Activated CD4-positive, alpha-beta T cell treated with anti-CD3 and anti-CD28 coated beads for 36 hours (primary cell): ENCODE measurements at regions of chr6 and their contacts with region 1.

Region 1: DNA sequence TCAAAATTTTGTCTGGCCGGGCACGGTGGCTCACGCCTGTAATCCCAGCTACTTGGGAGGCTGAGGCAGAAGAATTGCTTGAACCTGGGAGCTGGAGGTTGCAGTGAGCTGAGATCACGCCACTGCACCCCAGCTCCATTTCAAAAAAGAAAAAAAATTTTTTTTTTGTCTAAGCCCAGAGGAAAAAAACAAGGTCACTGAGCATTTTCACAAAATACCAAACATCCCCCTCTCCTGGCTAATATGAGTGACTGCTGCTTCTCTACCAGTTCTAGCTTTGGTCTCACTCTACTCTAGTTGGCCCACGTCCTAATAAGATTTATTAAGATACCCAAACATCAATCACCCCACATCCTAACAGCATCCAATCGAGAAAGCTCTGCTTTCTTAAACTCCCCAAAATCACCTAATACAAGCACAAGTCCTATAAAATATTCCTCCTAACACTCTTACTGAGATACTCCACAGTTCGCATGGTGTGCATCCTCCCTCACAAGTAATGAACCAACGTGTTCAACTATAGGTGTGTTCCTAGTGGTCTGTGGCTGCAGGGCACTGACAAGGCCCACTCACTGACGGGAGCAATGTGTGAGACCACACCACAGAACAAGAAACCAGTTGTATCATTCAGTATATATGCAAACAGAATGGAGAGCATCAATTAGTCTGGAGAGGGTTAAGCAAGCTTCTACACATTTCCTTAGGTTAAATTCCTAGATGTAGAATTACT is 64.2 kb downstream of the FKBP5 start:
- DNase-seq: no peak
- ATAC-seq: peak; percentile 57
- H3K4me3 Mint-ChIP-seq: no peak overlapping the region
- H3K27ac Mint-ChIP-seq: peak overlapping the region; percentile 58
- H3K4me1 Mint-ChIP-seq: peaks cover 41% of the 10 kb centered on the region
- H3K27me3 Mint-ChIP-seq: no peaks in the 10 kb centered on the region

Region 2: GRCh38 chr6:35590622-35591066 is 33.9 kb before region 1 on chr6:
- CTCF ChIA-PET with region 1: interaction called, 63 read pairs
- POLR2A ChIA-PET with region 1: no interaction called
- intact Hi-C with region 1: loop called in 1 of 2 experiments (anchors 2 kb)
- DNase-seq: no peak
- ATAC-seq: no peak
- H3K4me3 Mint-ChIP-seq: no peak overlapping the region
- H3K27ac Mint-ChIP-seq: peak overlapping the region; percentile 47
- H3K4me1 Mint-ChIP-seq: peaks cover 88% of the 10 kb centered on the region
- H3K27me3 Mint-ChIP-seq: no peaks in the 10 kb centered on the region

Region 3: DNA sequence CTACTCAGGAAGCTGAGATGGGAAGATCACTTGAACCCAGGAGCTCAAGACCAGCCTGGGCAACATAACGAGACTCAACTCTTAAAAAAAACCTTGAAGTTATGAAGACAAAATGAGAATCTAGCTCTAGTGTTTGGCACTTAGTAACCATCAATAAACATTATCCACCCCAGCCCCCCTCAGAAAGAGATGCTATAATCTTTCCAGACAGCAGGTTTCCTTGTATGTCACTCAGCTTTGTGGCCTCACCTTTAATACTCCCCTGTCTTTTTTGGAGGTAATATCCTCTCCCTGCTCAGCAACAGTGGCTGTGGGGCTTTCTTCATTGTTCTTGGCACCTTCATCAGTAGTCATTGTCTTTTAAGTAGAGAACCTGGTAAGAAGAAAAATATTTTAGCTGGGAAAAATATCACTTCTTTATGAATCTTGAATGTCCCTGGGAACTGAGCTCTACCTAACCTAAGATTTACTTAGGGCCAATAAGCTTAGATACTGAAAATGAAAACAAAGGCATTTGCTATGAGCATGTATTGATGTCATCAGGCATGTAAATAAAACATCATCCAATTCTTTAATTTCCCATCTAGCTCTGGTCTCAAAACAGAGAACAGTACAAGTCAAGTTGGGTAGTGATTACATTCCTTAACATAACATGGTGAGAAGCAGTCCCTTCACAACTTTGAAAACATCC is 18.1 kb after region 1 on chr6:
- CTCF ChIA-PET with region 1: interaction called, 17 read pairs
- POLR2A ChIA-PET with region 1: no interaction called
- intact Hi-C with region 1: no loop called
- DNase-seq: no peak
- ATAC-seq: peak; percentile 47
- H3K4me3 Mint-ChIP-seq: no peak overlapping the region
- H3K27ac Mint-ChIP-seq: peak overlapping the region; percentile 21
- H3K4me1 Mint-ChIP-seq: peaks cover 67% of the 10 kb centered on the region
- H3K27me3 Mint-ChIP-seq: no peaks in the 10 kb centered on the region

Region 4: GRCh38 chr6:35710241-35710847 is 85.8 kb after region 1 on chr6:
- CTCF ChIA-PET with region 1: no interaction called
- POLR2A ChIA-PET with region 1: no interaction called
- intact Hi-C with region 1: no loop called
- DNase-seq: peak; percentile 75
- ATAC-seq: peak; percentile 96
- H3K4me3 Mint-ChIP-seq: peak overlapping the region; percentile 34
- H3K27ac Mint-ChIP-seq: peak overlapping the region; percentile 84
- H3K4me1 Mint-ChIP-seq: peaks cover 29% of the 10 kb centered on the region
- H3K27me3 Mint-ChIP-seq: no peaks in the 10 kb centered on the region